ENCODE measurements at regions of chr9 and their contacts with region 1.

Region 1: GRCh38 chr9:22307013-22307711 is 139.5 kb upstream of the DMRTA1 start:
- DNase-seq: peak; percentile 55
- H3K4me3 Mint-ChIP-seq: peak overlapping the region; percentile 9
- H3K27ac Mint-ChIP-seq: peak overlapping the region; percentile 25
- H3K4me1 Mint-ChIP-seq: peaks cover 46% of the 10 kb centered on the region
- H3K27me3 Mint-ChIP-seq: no peaks in the 10 kb centered on the region
- CTCF ChIP-seq: peak; percentile 36

Region 2: DNA sequence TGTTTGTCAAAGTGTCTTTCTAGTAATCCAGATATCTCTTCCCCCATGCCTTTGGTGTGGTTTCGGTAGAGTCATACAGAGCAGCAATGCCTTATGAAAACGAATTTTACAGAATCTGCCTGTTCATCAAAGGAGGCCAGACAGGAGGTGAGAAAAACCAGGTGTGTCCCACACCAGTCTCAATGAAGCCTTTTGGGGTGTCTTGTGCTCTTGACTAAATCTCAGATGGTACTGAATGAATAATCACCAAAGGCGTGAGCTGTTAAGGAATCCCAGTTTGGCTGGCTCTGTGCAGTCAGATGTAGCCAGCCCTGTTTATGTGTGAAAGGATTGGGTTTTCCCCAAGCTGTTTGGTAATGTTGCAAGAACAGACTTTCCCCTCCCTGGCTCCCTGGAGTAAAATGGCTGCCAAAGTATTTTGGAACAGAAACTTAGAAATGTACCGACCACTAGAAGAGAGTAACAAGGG is 227.3 kb before region 1 on chr9:
- CTCF ChIA-PET with region 1: no interaction called
- intact Hi-C with region 1: no loop called
- DNase-seq: peak; percentile 11
- H3K4me3 Mint-ChIP-seq: no peak overlapping the region
- H3K27ac Mint-ChIP-seq: no peak overlapping the region
- H3K4me1 Mint-ChIP-seq: peaks cover 35% of the 10 kb centered on the region
- H3K27me3 Mint-ChIP-seq: no peaks in the 10 kb centered on the region
- CTCF ChIP-seq: no peak

Region 3: DNA sequence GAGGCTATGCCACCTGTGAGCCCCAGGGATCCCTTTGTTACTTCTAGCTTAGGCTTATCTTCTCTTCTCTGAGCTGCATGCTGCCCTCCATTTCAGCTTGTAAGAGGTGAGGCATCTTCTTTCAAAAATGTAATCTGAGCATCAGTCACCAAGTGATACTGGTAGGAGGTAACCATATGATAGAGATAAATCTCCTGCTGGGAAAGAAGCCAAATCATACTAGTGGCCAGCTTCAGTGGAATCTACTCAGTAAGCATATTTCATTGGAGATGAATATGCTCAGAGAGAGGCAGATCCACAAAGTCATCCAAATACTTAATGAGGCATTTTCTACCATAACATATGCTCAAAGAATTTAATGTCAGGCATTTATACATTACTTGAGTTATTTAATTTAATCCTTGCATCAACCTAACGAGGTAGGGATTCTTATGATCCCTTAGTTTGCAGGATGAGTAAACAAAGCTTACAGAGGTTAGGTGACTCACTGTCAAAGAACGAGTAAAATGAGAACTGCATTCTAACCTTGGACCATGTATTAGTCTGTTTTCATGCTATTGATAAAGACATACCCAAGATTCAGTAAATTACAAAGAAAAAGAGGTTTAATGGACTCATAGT is 88.5 kb after region 1 on chr9:
- CTCF ChIA-PET with region 1: no interaction called
- intact Hi-C with region 1: loop called (anchors 10 kb)
- DNase-seq: no peak
- H3K4me3 Mint-ChIP-seq: no peak overlapping the region
- H3K27ac Mint-ChIP-seq: no peak overlapping the region
- H3K4me1 Mint-ChIP-seq: peaks cover 9% of the 10 kb centered on the region
- H3K27me3 Mint-ChIP-seq: no peaks in the 10 kb centered on the region
- CTCF ChIP-seq: no peak

Region 4: DNA sequence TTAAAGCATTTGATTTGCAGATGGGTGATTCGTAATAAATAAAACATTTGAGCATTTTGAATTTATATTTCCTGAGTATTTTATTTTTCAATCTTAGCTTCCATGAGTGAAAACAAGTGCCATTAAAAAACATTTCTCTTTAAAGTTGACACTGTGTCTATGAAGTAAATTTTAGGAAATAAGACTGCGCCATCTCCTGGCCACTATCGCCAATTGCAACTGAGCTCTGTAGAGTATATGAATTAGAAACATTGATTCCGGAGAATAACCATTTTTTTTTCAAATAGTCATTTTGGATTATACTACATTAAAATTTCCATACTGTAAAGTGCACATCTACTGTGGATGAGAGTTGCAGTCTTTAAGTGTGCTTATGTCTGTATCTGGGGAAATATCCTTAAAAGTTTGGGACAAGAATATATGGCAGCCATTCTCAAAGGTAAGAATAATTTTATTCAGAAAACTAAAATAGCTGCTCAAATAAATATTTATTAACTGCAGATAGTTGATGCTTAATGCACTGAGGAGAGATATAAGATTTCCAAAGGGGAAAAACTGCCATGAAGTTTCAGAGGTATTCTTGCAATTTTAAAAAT is 145.4 kb after region 1 on chr9:
- CTCF ChIA-PET with region 1: interaction called, 25 read pairs
- intact Hi-C with region 1: loop called (anchors 1 kb)
- DNase-seq: peak; percentile 36
- H3K4me3 Mint-ChIP-seq: no peak overlapping the region
- H3K27ac Mint-ChIP-seq: no peak overlapping the region
- H3K4me1 Mint-ChIP-seq: peaks cover 7% of the 10 kb centered on the region
- H3K27me3 Mint-ChIP-seq: no peaks in the 10 kb centered on the region
- CTCF ChIP-seq: peak; percentile 57

Region 5: DNA sequence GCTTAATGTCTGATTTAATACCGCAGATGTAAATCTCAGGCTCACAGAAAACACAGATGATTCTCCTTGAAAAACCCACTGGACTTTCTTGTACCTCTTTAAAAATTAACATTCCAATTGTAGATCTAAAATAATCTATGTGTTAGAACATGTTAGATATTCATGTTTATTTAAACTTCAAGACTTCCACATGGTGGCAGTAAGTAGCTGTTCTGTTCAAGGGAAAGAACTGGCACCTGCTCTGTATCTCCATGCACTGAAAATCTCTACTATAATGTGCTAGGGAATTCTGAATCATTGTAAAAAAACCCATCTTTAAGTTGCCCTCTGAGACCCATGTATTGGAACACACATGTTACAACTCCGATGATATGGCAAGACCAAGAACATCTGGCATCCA is 506.4 kb after region 1 on chr9:
- CTCF ChIA-PET with region 1: interaction called, 4 read pairs
- intact Hi-C with region 1: loop called (anchors 5 kb)
- DNase-seq: no peak
- H3K4me3 Mint-ChIP-seq: no peak overlapping the region
- H3K27ac Mint-ChIP-seq: no peak overlapping the region
- H3K4me1 Mint-ChIP-seq: no peaks in the 10 kb centered on the region
- H3K27me3 Mint-ChIP-seq: peaks cover 19% of the 10 kb centered on the region
- CTCF ChIP-seq: no peak

Measured in Calu3 (cell line).